ENCODE measurements at regions of chr6 and their contacts with region 1.

Region 1: GRCh38 chr6:41367700-41368099 is 32.3 kb downstream of the NCR2 start:
- DNase-seq: peak; percentile 69 to 78 (median 76)
- ATAC-seq: peak; percentile 95
- H3K4me3 ChIP-seq: no peak overlapping the region
- H3K27ac ChIP-seq: no peak overlapping the region
- H3K4me1 ChIP-seq: peaks cover 0 to 11% of the 10 kb centered on the region in 2 experiments; a peak in 2 of 5 replicates
- H3K27me3 ChIP-seq: peaks cover 23 to 31% of the 10 kb centered on the region in 2 experiments
- CTCF ChIP-seq: peak; percentile 80 to 87 (median 85)
- EP300 ChIP-seq: no peak
- POLR2A ChIP-seq: no peak
- RAD21 ChIP-seq: peak; percentile 58 to 86

Region 2: GRCh38 chr6:41306187-41306854 is 61.4 kb before region 1 on chr6:
- CTCF ChIA-PET with region 1: interaction called, 34 read pairs
- POLR2A ChIA-PET with region 1: no interaction called
- in situ Hi-C with region 1: no loop called
- intact Hi-C with region 1: no loop called
- DNase-seq: peak; percentile 62 to 76 (median 66)
- ATAC-seq: peak; percentile 89
- H3K4me3 ChIP-seq: no peak overlapping the region
- H3K27ac ChIP-seq: no peak overlapping the region
- H3K4me1 ChIP-seq: no peaks in the 10 kb centered on the region
- H3K27me3 ChIP-seq: peaks cover 15 to 18% of the 10 kb centered on the region in 2 experiments; a peak in 4 of 5 replicates
- CTCF ChIP-seq: peak; percentile 64 to 90 (median 68)
- EP300 ChIP-seq: no peak
- POLR2A ChIP-seq: no peak
- RAD21 ChIP-seq: peak; percentile 64 to 67

Region 3: GRCh38 chr6:41463062-41463930 is 95.6 kb after region 1 on chr6:
- CTCF ChIA-PET with region 1: interaction called, 3 read pairs
- POLR2A ChIA-PET with region 1: interaction called, 3 read pairs
- in situ Hi-C with region 1: no loop called
- intact Hi-C with region 1: loop called (anchors 5 kb)
- DNase-seq: peak; percentile 78 to 89 (median 82)
- ATAC-seq: peak; percentile 98
- H3K4me3 ChIP-seq: no peak overlapping the region
- H3K27ac ChIP-seq: no peak overlapping the region
- H3K4me1 ChIP-seq: no peaks in the 10 kb centered on the region
- H3K27me3 ChIP-seq: peaks cover 13 to 40% of the 10 kb centered on the region in 2 experiments; a peak in 4 of 5 replicates
- CTCF ChIP-seq: peak; percentile 81 to 97 (median 90)
- EP300 ChIP-seq: no peak
- POLR2A ChIP-seq: no peak
- RAD21 ChIP-seq: peak; percentile 82 to 95

Region 4: DNA sequence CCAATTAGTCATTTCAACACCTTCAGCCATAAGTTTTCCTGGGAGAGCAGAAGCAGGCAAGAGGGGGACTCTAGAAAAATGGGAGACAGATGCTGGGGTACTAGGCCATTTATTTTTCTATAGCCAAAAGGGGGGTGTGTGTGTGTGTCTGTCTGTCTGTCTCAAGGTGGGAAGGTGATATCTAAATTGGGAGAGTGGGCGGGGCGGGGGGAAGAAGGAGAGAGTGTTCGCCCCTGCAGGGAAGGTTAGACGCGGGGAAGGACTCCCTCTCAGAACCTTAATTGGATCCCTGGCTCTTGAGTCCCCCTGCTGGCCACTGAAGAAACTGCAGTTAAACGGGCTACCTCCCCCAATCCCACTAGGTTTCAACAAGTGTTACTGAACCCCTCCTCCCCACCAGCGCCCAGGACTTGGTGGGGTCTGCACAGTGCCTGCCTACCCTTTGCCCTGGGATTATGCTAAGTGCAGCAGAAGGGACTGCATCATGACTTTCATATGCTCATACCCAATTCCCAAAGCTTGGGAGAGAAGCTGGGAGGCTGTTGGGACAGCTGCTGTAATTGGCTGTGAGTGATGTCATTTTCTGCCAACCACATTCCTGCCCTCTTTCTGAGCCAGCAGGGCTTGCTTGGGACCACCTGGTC is 224.3 kb after region 1 on chr6:
- CTCF ChIA-PET with region 1: interaction called, 37 read pairs
- POLR2A ChIA-PET with region 1: no interaction called
- in situ Hi-C with region 1: loop called (anchors 10 kb)
- intact Hi-C with region 1: loop called (anchors 1 kb)
- DNase-seq: peak; percentile 80 to 92 (median 91)
- ATAC-seq: peak; percentile 93
- H3K4me3 ChIP-seq: no peak overlapping the region
- H3K27ac ChIP-seq: no peak overlapping the region
- H3K4me1 ChIP-seq: peaks cover 0 to 7% of the 10 kb centered on the region in 2 experiments; a peak in 1 of 5 replicates
- H3K27me3 ChIP-seq: no peaks in the 10 kb centered on the region
- CTCF ChIP-seq: peak; percentile 93 to 98 (median 97)
- EP300 ChIP-seq: no peak
- POLR2A ChIP-seq: no peak
- RAD21 ChIP-seq: peak; percentile 89 to 96

Region 5: DNA sequence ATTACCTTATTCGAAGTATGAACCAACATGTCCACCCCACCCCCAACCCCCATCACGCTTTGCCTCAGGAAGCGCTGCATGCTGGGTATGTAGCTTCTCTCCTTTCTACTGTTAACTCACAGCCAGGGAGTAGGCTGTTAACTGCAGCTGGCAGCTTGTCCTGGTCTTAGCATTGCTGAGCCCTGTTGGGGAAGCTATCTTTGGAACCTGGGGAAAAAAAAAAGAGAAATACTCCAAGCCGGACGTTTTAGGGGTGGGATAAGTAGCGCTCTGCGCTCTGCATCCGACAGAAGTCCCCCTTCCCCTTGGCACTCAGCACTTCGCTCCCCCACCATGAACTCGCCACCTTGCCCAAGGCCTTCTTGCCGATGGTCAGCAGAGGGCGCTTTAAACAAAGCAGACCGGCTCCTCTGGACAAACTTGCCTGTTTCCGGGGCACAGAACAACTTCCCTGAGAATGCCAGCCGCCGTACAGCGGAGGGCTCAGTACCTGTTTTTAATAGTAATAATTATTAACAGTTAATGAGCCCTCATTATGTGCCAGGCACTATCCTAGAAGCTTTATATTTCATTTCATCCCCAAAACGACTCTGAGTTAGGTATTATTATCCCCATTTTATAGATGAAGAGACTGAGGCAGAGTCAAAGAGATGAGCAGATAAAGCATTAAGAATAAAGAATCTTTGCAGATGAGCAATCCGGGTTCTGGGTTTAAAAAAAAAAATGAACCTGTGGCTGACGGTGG is 235.3 kb after region 1 on chr6:
- CTCF ChIA-PET with region 1: interaction called, 11 read pairs
- POLR2A ChIA-PET with region 1: no interaction called
- in situ Hi-C with region 1: loop called (anchors 10 kb)
- intact Hi-C with region 1: loop called (anchors 2 kb)
- DNase-seq: peak; percentile 83 to 87 (median 84)
- ATAC-seq: peak; percentile 85
- H3K4me3 ChIP-seq: no peak overlapping the region
- H3K27ac ChIP-seq: no peak overlapping the region
- H3K4me1 ChIP-seq: peaks cover 0 to 9% of the 10 kb centered on the region in 2 experiments; a peak in 3 of 5 replicates
- H3K27me3 ChIP-seq: peaks cover 15 to 28% of the 10 kb centered on the region in 2 experiments; a peak in 3 of 5 replicates
- CTCF ChIP-seq: peak; percentile 92 to 94 (median 94)
- EP300 ChIP-seq: no peak
- POLR2A ChIP-seq: no peak
- RAD21 ChIP-seq: peak; percentile 83 to 92

Region 6: GRCh38 chr6:41683510-41684310 is 316.0 kb after region 1 on chr6:
- CTCF ChIA-PET with region 1: interaction called, 150 read pairs
- POLR2A ChIA-PET with region 1: no interaction called
- in situ Hi-C with region 1: loop called (anchors 5 kb)
- intact Hi-C with region 1: loop called (anchors 1 kb)
- DNase-seq: peak; percentile 86 to 94 (median 92)
- ATAC-seq: peak; percentile 95
- H3K4me3 ChIP-seq: no peak overlapping the region
- H3K27ac ChIP-seq: no peak overlapping the region
- H3K4me1 ChIP-seq: peaks cover 0 to 15% of the 10 kb centered on the region in 2 experiments; a peak in 2 of 5 replicates
- H3K27me3 ChIP-seq: peaks cover 12 to 35% of the 10 kb centered on the region in 2 experiments; a peak in 4 of 5 replicates
- CTCF ChIP-seq: peak; percentile 93 to 97 (median 95)
- EP300 ChIP-seq: no peak
- POLR2A ChIP-seq: no peak
- RAD21 ChIP-seq: peak; percentile 84 to 94

Region 7: DNA sequence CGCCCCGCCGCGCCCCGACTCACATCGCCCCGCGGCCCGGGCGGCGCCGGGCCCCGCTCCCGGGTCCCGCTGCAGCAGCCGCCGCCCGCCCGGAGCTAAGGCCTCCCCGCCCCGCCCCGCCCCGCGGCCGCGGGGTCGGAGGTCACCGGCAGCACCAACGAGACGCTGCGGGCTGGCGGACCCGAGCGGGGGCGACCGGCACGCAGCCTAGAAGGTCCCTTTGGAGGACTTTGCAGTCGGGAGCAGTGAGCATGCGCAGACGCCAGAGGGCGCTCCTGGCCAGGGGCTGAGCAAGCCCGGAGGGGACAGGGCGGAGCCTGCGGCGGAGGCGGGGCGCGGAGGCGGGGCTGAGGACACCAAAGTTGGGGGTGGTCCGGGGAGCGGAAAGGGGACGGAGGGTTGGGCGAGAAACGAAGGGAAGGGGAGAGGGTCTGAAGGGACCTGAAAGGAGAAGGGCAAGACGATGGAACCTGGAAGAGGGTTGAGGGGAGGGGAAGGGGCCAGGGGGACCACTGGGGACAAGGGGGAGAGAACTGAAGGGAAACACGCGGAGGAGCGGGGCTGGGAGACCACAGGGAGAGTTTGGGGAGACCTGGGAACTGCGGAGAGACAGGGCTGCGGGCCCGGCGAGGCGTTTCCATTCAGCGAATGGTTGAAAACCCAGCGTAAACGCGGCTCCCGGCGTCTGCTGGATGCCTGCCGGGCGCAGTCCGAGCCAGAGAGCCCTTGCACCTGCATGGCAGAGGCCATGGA is 412.3 kb after region 1 on chr6 and contains the start of gene FRS3:
- CTCF ChIA-PET with region 1: interaction called, 7 read pairs
- POLR2A ChIA-PET with region 1: no interaction called
- in situ Hi-C with region 1: no loop called
- intact Hi-C with region 1: loop called (anchors 5 kb)
- DNase-seq: peak; percentile 98 to 99 (median 98)
- ATAC-seq: peak; percentile 94
- H3K4me3 ChIP-seq: peak within 1 kb of the TSS; percentile 69
- H3K27ac ChIP-seq: peak within 1 kb of the TSS; percentile 51; the same call in 2 of the 3 replicates
- H3K4me1 ChIP-seq: peaks cover 17 to 27% of the 10 kb centered on the region in 2 experiments
- H3K27me3 ChIP-seq: no peaks in the 10 kb centered on the region
- CTCF ChIP-seq: peak; percentile 94 to 99 (median 98)
- EP300 ChIP-seq: peak; percentile 44
- POLR2A ChIP-seq: no peak
- RAD21 ChIP-seq: peak; percentile 99
- polyA plus RNA-seq, gene FRS3: 0.03 to 0.06 TPM

Region 8: GRCh38 chr6:42217519-42218367 is 850.0 kb after region 1 on chr6 and contains the start of gene MRPS10:
- CTCF ChIA-PET with region 1: no interaction called
- POLR2A ChIA-PET with region 1: no interaction called
- in situ Hi-C with region 1: no loop called
- intact Hi-C with region 1: no loop called
- DNase-seq: peak; percentile 96 to 99 (median 96)
- ATAC-seq: peak; percentile 98
- H3K4me3 ChIP-seq: peak within 1 kb of the TSS; percentile 77
- H3K27ac ChIP-seq: peak within 1 kb of the TSS; percentile 92
- H3K4me1 ChIP-seq: peaks cover 6 to 14% of the 10 kb centered on the region in 2 experiments; a peak in 4 of 5 replicates
- H3K27me3 ChIP-seq: no peaks in the 10 kb centered on the region
- CTCF ChIP-seq: no peak
- EP300 ChIP-seq: 0 out of 2 replicates have a peak, but pooled peaks have one; percentile 48
- POLR2A ChIP-seq: peak; percentile 97
- RAD21 ChIP-seq: no peak
- polyA plus RNA-seq, gene MRPS10: 126 to 166 TPM

Measured in K562 (cell line).